Upper lobe of right lung (tissue), 1 donor: ENCODE measurements at regions of chr14 and their contacts with region 1.

Region 1: DNA sequence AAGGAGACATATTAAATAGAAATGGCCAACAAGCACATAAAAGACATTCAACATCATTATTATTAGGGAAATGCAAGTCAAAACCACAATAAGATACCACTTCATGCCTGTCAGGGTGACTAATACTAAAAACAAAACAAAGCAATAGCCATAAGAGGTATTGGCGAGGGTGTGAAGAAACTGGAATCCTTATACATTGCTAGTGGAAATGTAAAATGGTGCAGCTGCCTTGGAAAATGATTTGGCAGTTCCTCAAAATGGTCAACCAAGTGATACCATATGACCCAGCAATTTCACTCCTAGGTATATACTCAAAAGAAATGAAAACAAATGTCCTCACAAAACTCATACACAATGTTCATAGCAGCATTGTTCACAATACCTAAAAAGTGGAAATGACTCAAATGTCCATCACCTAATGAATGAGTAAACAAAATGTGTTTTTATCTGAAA is 27.0 kb downstream of the GPR135 start:
- DNase-seq: no peak
- ATAC-seq: no peak
- H3K4me3 ChIP-seq: no peak overlapping the region
- H3K27ac ChIP-seq: no peak overlapping the region
- H3K4me1 ChIP-seq: no peaks in the 10 kb centered on the region
- H3K27me3 ChIP-seq: no peaks in the 10 kb centered on the region
- CTCF ChIP-seq: no peak

Region 2: DNA sequence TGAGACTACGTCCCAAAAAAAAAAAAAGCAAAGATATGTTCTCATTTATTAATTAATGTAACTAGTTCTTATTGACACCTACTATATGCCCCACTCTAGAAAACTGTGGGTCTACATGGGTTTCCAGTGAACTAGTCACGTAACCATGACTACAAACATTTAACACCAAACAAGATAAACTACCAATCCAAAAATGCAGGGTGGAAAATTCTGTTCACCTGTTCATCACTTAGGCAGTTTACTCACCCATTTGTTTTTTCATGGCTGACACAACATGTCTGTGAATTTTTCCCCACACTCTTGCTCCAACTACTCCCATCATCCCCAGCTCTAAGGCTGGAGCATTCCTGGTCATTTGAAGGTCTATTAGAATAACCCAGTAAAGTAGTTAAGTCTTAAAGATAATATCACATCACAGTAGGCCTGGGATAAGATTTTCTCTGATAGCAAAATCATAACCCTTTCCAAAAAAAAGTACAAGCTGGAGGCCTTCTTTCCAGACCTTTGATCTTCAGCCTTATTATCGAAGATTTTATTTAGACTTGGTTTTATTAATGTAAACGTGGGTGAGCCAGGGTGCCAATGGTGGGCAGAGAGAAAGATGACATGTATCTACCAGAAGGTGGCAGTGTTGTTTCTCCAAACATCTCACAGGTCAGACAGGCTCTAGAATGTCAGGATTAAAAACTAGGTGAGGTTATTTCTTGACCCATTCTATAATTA is 311.4 kb before region 1 on chr14:
- intact Hi-C with region 1: loop called (anchors 5 kb)
- DNase-seq: no peak
- ATAC-seq: peak; percentile 93
- H3K4me3 ChIP-seq: no peak overlapping the region
- H3K27ac ChIP-seq: no peak overlapping the region
- H3K4me1 ChIP-seq: peaks cover 1% of the 10 kb centered on the region
- H3K27me3 ChIP-seq: no peaks in the 10 kb centered on the region
- CTCF ChIP-seq: peak; percentile 82

Region 3: DNA sequence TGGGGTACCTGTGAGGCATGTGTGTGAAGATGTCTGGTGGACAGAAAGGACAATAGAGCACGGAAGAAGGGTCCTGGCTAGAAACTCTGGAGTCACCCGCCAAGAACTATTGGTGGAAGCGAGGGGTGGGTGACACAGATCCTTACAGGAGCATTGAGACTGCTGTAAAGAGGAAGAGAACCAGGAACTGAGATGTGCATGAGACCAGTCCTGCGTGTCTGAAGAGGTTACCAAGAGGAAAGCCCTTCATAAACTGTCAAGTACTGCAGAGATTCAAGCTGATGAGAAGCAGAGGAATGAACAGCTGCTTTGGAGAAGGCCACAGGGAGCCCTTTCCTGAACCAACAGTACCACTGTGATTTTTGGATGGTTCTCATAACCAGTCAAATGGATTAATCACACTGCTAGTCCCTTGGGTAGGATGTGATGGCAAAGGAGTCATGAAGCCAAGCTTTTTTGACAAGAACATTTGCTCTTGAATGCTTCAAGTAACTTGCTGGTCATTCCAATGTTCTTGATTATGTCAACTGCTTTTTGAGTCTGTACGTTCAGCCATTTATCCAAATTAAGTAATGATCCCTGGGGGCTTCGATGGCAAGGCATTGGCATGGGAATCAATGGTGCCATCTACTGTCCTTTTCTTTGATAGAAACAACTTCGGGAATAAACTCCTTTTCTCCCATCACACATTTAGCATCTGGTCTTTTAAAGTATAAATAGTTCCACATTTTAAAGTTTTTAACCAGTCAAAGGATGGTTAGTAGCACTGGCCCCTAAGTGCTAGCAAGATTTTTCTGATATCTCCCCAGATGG is 15.9 kb before region 1 on chr14:
- intact Hi-C with region 1: no loop called
- DNase-seq: no peak
- ATAC-seq: peak; percentile 14
- H3K4me3 ChIP-seq: no peak overlapping the region
- H3K27ac ChIP-seq: no peak overlapping the region
- H3K4me1 ChIP-seq: peaks cover 6% of the 10 kb centered on the region
- H3K27me3 ChIP-seq: no peaks in the 10 kb centered on the region
- CTCF ChIP-seq: peak; percentile 30

Region 4: GRCh38 chr14:59534361-59534987 is 96.3 kb after region 1 on chr14:
- intact Hi-C with region 1: no loop called
- DNase-seq: no peak
- ATAC-seq: no peak
- H3K4me3 ChIP-seq: no peak overlapping the region
- H3K27ac ChIP-seq: no peak overlapping the region
- H3K4me1 ChIP-seq: no peaks in the 10 kb centered on the region
- H3K27me3 ChIP-seq: no peaks in the 10 kb centered on the region
- CTCF ChIP-seq: no peak